Dendritic cell treated with granulocyte-macrophage colony-stimulating factor and Interleukin-4, amounts not matched to agents 40 ng/mL and 50 ng/mL, for 4 days (primary cell): ENCODE measurements at regions of chr2 and their contacts with region 1.

Region 1: DNA sequence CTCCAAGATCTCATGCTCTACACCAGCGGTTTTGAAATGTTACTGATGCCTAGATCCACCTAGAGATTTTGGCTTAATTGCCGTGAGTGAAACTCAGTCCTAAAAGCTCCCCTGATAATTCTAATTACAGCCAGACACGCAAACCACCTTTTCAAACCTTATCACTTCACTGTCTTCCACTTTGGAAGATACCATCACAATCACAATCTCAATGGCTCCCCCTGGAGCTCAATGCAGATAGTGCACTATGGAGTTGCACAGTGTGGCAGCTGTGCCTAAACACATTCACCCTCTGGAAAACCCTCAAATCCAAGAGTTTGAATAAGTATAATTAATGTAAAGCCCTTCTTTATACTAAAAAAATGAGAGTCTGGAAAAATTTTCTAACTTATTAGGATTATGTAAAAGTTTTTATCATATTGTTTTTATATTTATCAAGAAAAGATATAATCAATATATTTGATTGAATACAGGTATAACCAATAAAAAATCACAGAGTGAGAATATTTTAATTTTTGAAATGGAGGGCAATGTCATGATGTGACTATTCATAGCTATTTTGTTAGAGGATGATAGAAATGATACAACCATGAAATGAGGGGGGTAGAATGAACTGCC is 102.9 kb upstream of the SLC8A1 start:
- H3K4me3 Mint-ChIP-seq: no peak overlapping the region
- H3K27ac Mint-ChIP-seq: no peak overlapping the region
- H3K4me1 Mint-ChIP-seq: peaks cover 30% of the 10 kb centered on the region
- H3K27me3 Mint-ChIP-seq: no peaks in the 10 kb centered on the region

Region 2: GRCh38 chr2:40244675-40245074 is 310.1 kb before region 1 on chr2:
- intact Hi-C with region 1: loop called (anchors 1 kb)
- H3K4me3 Mint-ChIP-seq: no peak overlapping the region
- H3K27ac Mint-ChIP-seq: no peak overlapping the region
- H3K4me1 Mint-ChIP-seq: no peaks in the 10 kb centered on the region
- H3K27me3 Mint-ChIP-seq: no peaks in the 10 kb centered on the region

Region 3: GRCh38 chr2:40332191-40332826 is 222.5 kb before region 1 on chr2:
- intact Hi-C with region 1: loop called (anchors 10 kb)
- H3K4me3 Mint-ChIP-seq: no peak overlapping the region
- H3K27ac Mint-ChIP-seq: no peak overlapping the region
- H3K4me1 Mint-ChIP-seq: peaks cover 28% of the 10 kb centered on the region
- H3K27me3 Mint-ChIP-seq: no peaks in the 10 kb centered on the region

Region 4: DNA sequence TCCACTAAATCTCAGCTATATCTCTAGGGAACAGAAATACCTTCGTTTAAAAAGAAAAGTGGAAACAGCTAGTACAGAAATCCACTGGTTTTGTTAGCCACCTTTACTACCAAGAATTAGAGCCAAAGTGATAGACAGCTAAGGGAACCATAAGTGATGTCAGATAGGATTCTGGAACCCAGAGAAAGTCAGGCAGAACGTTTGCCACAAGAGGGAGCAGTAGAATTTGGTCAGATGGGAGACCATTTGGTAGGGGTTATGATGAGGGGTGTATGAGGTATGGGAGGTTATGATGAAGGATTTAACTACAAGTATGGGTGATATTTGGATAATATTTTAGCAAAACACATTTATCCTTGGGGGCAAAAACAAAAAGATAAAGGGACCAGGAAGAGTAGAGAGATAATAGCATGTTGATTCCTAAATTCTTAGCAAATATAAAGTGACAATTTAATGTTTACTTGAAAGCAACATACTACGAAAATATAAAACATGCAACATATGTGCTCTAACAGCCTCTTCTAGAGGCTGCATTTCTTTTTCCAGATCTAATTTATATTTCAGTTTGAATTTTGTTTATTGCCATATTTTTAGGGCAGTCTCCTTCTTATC is 106.2 kb before region 1 on chr2:
- intact Hi-C with region 1: loop called (anchors 2 kb)
- H3K4me3 Mint-ChIP-seq: no peak overlapping the region
- H3K27ac Mint-ChIP-seq: no peak overlapping the region
- H3K4me1 Mint-ChIP-seq: peaks cover 74% of the 10 kb centered on the region
- H3K27me3 Mint-ChIP-seq: no peaks in the 10 kb centered on the region

Region 5: DNA sequence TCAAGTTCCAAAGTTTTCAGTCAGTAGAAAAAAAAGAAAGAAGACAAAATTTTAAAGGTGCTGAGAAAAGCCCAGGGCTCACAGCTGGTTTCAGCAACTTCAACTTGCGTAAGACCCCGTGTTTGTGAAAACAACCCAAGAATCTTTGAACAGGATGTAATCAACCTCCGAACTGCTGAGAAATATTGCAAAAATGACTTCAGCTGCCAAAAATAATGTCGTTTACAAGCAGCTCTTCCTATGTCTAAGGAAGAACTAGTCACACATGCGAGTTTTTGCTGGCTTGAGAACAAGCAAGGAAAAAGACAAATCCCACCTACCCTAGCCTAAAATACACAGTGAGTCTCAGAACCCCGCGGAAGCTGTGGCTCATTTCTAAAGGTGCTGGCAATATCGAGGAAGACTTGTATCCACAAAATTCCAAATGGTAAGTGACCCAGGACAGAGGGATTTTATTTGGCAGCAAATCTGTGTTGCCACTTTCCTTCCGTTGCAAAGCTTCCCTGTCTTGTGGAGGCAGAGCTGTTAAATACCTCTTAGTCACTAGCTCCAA is 43.0 kb before region 1 on chr2:
- intact Hi-C with region 1: no loop called
- H3K4me3 Mint-ChIP-seq: peak overlapping the region; percentile 13
- H3K27ac Mint-ChIP-seq: peak overlapping the region; percentile 60
- H3K4me1 Mint-ChIP-seq: peaks cover 55% of the 10 kb centered on the region
- H3K27me3 Mint-ChIP-seq: no peaks in the 10 kb centered on the region

Region 6: GRCh38 chr2:40534528-40534927 is 20.2 kb before region 1 on chr2:
- intact Hi-C with region 1: no loop called
- H3K4me3 Mint-ChIP-seq: no peak overlapping the region
- H3K27ac Mint-ChIP-seq: no peak overlapping the region
- H3K4me1 Mint-ChIP-seq: no peaks in the 10 kb centered on the region
- H3K27me3 Mint-ChIP-seq: no peaks in the 10 kb centered on the region